ENCODE measurements at regions of chr9 and their contacts with region 1.

Region 1: GRCh38 chr9:108272349-108272899 is 583.4 kb downstream of the ACTL7B start:
- DNase-seq: peak; percentile 6 to 50
- ATAC-seq: peak; percentile 59 to 87
- H3K4me3 ChIP-seq: peak overlapping the region; percentile 2 to 33 (median 26)
- H3K27ac ChIP-seq: peak overlapping the region; percentile 41 to 65 (median 50)
- H3K4me1 ChIP-seq: peaks cover 9 to 13% of the 10 kb centered on the region in 2 donors
- H3K27me3 ChIP-seq: no peaks in the 10 kb centered on the region
- CTCF ChIP-seq: peak; percentile 32 to 71 (median 57)
- POLR2A ChIP-seq: no peak

Region 2: DNA sequence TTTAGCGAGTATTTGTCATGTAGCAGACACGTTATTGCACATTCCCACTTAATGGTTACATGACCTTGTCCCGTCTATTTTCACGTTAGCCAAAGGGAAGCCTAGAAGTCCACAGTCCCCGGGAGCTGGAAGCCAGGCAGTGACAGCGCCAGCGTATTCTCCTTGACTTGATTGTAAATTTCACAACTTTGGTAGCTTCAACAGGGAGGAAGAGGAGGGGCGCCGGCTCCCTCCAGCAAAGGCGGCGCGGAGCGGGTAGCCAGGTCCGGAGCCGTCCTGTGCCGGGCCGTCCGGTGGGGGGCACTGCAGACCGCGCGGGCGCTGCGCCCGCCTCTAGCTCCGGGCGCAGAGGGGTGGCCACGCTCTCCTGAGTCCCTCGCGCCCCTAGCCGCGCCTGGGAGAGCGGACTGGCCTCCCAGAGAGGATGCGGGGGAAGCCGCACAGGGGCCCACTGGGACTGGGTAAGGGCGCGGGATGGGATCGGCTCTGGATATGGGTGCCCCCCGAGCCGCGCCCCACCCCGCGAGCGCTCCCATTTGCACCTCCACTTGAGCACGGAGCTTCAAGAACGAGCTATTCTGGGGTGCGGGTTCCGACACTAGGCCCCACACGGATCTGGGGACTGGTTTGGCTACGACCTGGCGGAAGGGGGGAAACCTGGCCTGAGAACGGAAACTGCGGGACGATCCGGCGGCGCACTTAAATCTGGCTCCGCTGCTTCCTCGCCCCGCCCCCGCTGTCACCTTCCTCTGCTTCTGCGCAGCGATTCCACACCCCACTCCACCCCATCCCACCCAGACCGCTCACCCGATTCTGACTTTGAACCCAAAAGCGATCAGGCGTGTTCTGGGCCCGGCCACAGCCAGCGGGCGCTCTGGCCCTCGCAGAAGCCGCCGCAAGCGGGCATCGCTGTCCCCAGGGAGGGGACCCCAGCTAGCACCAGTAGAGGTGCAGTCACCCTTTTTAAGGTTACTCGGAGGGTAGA is 806.7 kb before region 1 on chr9:
- in situ Hi-C with region 1: loop called in 3 of 4 experiments (anchors 10 to 25 kb)
- intact Hi-C with region 1: loop called (anchors 5 kb)
- DNase-seq: peak; percentile 41 to 63
- ATAC-seq: peak; percentile 89 to 91
- H3K4me3 ChIP-seq: peak overlapping the region; percentile 58 to 76 (median 66)
- H3K27ac ChIP-seq: peak overlapping the region in 2 of 4 donors; percentile 21 to 35
- H3K4me1 ChIP-seq: no peaks in the 10 kb centered on the region
- H3K27me3 ChIP-seq: peaks cover 0 to 6% (median 4%) of the 10 kb centered on the region in 3 donors
- CTCF ChIP-seq: peak; percentile 86 to 96 (median 91)
- POLR2A ChIP-seq: no peak

Region 3: GRCh38 chr9:107472581-107473340 is 799.7 kb before region 1 on chr9:
- in situ Hi-C with region 1: loop called (anchors 5 to 25 kb)
- intact Hi-C with region 1: loop called (anchors 5 kb)
- DNase-seq: no peak
- ATAC-seq: no peak
- H3K4me3 ChIP-seq: no peak overlapping the region
- H3K27ac ChIP-seq: no peak overlapping the region
- H3K4me1 ChIP-seq: no peaks in the 10 kb centered on the region
- H3K27me3 ChIP-seq: no peaks in the 10 kb centered on the region
- CTCF ChIP-seq: no peak
- POLR2A ChIP-seq: no peak

Region 4: DNA sequence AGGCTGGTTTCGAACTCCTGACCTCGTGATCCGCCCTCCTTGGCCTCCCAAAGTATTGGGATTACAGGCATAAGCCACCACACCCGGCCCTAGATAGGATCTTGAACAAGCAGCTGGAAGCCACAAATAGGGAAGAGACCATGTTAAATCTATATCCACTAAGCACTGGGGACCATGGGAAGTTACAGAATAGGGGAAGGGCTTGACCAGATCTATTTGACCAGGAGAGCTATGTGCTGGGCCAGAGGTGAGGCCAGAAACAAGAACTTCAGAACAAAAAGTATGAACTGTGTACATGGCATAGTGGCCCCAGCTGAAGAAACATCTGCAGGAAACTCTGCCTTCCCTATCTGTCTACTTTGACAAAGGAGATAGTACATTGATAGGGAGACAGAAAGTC is 793.6 kb before region 1 on chr9:
- in situ Hi-C with region 1: loop called in 3 of 4 experiments (anchors 5 to 25 kb)
- intact Hi-C with region 1: no loop called
- DNase-seq: no peak
- ATAC-seq: no peak
- H3K4me3 ChIP-seq: no peak overlapping the region
- H3K27ac ChIP-seq: no peak overlapping the region
- H3K4me1 ChIP-seq: peaks cover 6% of the 10 kb centered on the region in 2 donors
- H3K27me3 ChIP-seq: no peaks in the 10 kb centered on the region
- CTCF ChIP-seq: no peak
- POLR2A ChIP-seq: no peak

Region 5: GRCh38 chr9:108257382-108257781 is 15.0 kb before region 1 on chr9:
- in situ Hi-C with region 1: no loop called
- intact Hi-C with region 1: no loop called
- DNase-seq: no peak
- ATAC-seq: no peak
- H3K4me3 ChIP-seq: no peak overlapping the region
- H3K27ac ChIP-seq: no peak overlapping the region
- H3K4me1 ChIP-seq: no peaks in the 10 kb centered on the region
- H3K27me3 ChIP-seq: no peaks in the 10 kb centered on the region
- CTCF ChIP-seq: no peak
- POLR2A ChIP-seq: no peak